ENCODE measurements at regions of chr1 and their contacts with region 1.

Region 1: DNA sequence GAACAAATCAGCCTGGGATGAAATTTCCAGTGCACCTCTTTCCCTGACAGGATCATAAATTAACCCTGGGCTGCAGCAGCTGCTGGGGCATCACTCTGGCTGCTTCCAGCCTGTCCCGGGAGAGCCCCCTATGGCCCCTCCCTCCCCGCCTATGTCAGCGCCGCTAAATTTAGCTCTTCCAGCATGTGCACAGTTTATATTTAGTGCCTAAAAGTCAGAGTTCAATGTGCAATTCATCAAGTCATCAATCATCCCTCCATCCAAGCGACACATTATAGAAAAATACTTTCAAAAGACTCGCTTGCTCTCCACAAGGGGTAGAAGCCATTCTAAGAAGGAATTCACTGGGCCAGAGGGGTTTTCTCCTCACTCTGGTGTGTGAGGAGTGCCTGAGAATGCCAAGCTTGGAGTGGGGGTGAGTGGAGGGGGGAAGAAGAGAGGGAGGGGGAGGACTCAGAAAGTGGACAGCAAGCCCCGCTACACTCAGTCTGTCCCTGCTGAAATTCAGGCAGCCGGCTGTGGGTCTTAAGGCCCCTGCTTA is 37.4 kb downstream of the XCL1 start:
- DNase-seq: no peak
- H3K4me3 ChIP-seq: no peak overlapping the region
- H3K27me3 ChIP-seq: no peaks in the 10 kb centered on the region; the same call in none of the 2 replicates
- CTCF ChIP-seq: no peak

Region 2: DNA sequence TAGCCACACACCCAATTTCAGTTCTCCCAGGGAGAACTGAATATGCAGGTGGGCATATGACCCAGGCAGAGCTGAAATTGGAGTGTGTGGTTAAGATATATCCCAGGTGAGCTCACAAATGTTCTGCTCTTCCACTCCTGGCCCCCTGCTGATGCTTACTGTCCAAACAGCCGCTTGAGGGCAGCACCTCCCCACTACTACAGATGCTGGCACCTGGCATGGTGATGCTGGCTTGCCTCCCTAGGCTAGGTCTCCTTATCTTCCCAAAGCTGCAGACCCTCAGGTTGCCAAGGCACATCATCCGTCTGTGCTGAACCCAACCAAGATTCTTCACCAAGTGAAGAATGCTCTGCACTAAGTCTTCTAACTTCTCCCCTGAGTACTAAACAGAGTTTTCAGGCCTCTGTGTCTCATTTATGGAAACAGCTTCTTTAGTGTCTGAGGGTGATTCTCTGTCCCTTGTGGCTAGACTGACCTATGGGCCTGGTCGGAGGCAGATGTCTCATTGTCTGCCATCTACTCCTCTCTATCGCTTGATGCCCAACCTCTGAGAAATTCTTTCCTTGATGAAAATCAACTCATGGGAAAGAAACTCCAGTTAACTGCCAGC is 10.2 kb before region 1 on chr1:
- CTCF ChIA-PET with region 1: interaction called, 17 read pairs
- POLR2A ChIA-PET with region 1: no interaction called
- DNase-seq: no peak
- H3K4me3 ChIP-seq: no peak overlapping the region
- H3K27me3 ChIP-seq: no peaks in the 10 kb centered on the region
- CTCF ChIP-seq: peak; percentile 81

Region 3: GRCh38 chr1:168719306-168720111 is 105.7 kb after region 1 on chr1:
- CTCF ChIA-PET with region 1: no interaction called
- POLR2A ChIA-PET with region 1: no interaction called
- DNase-seq: no peak
- H3K4me3 ChIP-seq: no peak overlapping the region
- H3K27me3 ChIP-seq: peaks cover 3% of the 10 kb centered on the region
- CTCF ChIP-seq: no peak